ENCODE measurements at regions of chr16 and their contacts with region 1.

Region 1: DNA sequence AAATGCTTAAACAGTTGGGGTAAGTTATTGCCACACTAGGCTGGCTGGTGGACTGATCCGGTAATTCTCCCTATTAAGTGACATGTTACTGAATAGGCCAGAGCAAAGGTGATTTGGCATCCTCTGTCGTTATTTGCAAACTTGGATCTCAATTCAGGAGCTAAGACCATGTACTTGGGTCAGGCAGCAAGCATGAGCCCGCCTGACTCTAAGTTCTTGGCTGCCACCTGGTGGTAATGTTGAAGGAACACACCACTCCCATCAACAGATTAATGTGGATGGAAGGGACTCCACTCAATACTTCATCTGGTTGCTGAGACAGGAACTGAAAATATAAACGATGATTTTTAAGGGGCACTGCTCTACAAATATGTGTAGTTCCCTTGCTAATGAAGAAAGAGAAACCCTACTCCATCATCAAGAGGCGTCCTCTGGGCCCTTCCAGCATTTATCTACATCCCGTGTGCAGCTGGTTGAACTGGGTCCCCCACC is 70.8 kb downstream of the EMP2 start:
- DNase-seq: peak in 1 of 2 donors; percentile 56
- ATAC-seq: peak; percentile 85
- H3K4me3 ChIP-seq: no peak overlapping the region
- H3K27ac ChIP-seq: no peak overlapping the region
- H3K4me1 ChIP-seq: no peaks in the 10 kb centered on the region
- H3K27me3 ChIP-seq: no peaks in the 10 kb centered on the region

Region 2: GRCh38 chr16:10256784-10257641 is 252.6 kb before region 1 on chr16:
- intact Hi-C with region 1: loop called (anchors 1 to 2 kb)
- DNase-seq: peak in 1 of 2 donors; percentile 83
- ATAC-seq: no peak
- H3K4me3 ChIP-seq: no peak overlapping the region
- H3K27ac ChIP-seq: no peak overlapping the region
- H3K4me1 ChIP-seq: no peaks in the 10 kb centered on the region
- H3K27me3 ChIP-seq: no peaks in the 10 kb centered on the region

Region 3: DNA sequence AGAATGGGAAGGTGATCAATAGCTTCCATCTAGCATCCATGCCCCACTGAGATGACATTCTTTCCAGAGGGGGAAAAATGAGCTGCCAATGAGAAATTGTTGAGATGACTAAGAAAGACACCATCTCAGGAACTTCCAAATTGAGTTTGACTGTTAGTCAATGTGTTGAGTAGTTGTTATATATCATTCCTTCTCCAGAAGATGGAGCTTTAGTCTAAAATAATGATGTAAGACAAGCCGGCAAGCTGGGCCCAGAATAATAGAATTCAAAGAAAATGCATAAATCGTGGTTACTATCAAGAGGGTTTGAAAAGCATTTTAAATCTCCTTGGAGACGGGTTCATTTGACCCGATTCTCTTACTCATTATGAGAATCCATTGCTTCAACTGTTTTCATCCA is 194.8 kb before region 1 on chr16:
- intact Hi-C with region 1: loop called (anchors 5 kb)
- DNase-seq: no peak
- ATAC-seq: no peak
- H3K4me3 ChIP-seq: no peak overlapping the region
- H3K27ac ChIP-seq: no peak overlapping the region
- H3K4me1 ChIP-seq: no peaks in the 10 kb centered on the region
- H3K27me3 ChIP-seq: no peaks in the 10 kb centered on the region

Region 4: DNA sequence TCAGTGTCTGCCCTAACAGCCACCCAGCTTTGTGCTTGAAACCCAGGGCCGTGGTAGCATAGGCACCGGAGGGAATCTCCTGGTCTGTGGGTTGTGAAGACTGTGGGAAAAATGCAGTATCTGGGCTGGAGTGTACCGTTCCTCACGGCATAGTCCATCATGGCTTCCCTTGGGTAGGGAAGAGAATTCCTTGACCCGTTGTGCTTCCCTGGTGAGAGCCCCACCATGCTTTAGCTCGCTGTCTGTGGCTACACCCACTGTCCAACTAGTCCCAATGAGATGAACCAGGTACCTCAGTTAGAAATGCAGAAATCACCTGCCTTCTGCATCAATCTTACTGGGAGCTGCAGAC is 56.4 kb before region 1 on chr16:
- intact Hi-C with region 1: no loop called
- DNase-seq: no peak
- ATAC-seq: no peak
- H3K4me3 ChIP-seq: no peak overlapping the region
- H3K27ac ChIP-seq: no peak overlapping the region
- H3K4me1 ChIP-seq: no peaks in the 10 kb centered on the region
- H3K27me3 ChIP-seq: no peaks in the 10 kb centered on the region

Region 5: GRCh38 chr16:10668322-10669045 is 158.9 kb after region 1 on chr16:
- intact Hi-C with region 1: no loop called
- DNase-seq: peak in 1 of 2 donors; percentile 47
- ATAC-seq: no peak
- H3K4me3 ChIP-seq: no peak overlapping the region
- H3K27ac ChIP-seq: no peak overlapping the region
- H3K4me1 ChIP-seq: no peaks in the 10 kb centered on the region
- H3K27me3 ChIP-seq: no peaks in the 10 kb centered on the region

Region 6: DNA sequence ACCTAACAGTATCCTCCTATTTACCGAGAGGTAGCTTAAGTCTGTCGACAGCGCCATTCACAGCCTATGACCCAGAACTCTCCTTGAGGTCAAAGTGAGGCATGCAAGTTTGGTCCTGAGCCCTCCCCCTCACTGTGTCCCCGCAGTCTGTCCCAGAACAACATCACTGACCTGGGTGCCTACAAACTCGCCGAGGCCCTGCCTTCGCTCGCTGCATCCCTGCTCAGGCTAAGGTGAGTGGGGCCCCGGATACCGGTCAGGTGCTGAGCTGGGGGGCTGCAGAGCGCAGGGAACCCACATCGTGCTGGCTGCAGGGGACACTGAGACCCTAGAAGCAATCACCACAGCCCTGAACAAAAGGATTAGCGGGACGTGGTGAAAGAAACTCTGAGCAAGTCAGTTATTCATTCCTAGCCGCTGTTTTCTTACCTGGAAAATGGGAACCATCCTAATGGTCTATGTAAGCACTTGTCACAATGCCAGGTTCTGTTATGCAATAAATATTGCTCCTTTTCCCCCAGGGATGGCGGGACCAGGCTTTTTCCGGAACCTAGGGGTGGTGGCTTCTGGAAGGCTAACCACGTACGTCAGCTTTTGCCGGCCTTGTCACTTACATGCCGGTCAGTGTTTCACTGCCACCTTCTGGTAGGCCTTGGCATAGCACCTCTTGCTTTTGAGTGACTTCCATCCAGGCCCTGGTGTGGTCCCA is 408.9 kb after region 1 on chr16:
- intact Hi-C with region 1: loop called in 1 of 2 experiments (anchors 5 kb)
- DNase-seq: peak; percentile 96 to 97
- ATAC-seq: peak; percentile 94
- H3K4me3 ChIP-seq: no peak overlapping the region
- H3K27ac ChIP-seq: no peak overlapping the region
- H3K4me1 ChIP-seq: no peaks in the 10 kb centered on the region
- H3K27me3 ChIP-seq: no peaks in the 10 kb centered on the region

Measured in aorta (tissue), 5 donors.